ENCODE measurements at regions of chr14 and their contacts with region 1.

Region 1: GRCh38 chr14:104768437-104769323 is 15.7 kb downstream of the SIVA1 start:
- DNase-seq: peak; percentile 65
- H3K27ac ChIP-seq: peak overlapping the region; percentile 65
- CTCF ChIP-seq: peak; percentile 88

Region 2: DNA sequence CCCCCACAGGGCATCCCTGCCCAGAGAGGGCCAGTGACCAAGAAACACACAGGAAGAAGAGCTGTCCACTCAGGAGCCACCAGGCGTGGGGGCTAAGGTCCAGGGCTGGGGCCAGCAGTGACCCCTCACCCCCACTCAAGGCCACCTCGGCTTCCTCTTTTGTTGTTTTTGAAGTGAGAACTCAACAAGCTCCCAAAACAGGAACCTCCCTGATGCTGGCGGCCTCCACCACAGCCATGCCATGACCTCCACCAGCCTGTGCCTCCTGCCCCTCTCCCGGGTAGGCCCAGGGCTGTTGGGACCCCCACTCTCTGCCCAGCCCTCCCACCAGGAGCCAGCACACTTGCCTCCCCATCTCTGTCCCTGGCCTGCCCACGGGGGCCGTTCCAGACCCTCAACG is 19.1 kb after region 1 on chr14:
- CTCF ChIA-PET with region 1: interaction called, 10 read pairs
- POLR2A ChIA-PET with region 1: no interaction called
- DNase-seq: no peak
- H3K27ac ChIP-seq: peak overlapping the region; percentile 84
- CTCF ChIP-seq: no peak

Region 3: DNA sequence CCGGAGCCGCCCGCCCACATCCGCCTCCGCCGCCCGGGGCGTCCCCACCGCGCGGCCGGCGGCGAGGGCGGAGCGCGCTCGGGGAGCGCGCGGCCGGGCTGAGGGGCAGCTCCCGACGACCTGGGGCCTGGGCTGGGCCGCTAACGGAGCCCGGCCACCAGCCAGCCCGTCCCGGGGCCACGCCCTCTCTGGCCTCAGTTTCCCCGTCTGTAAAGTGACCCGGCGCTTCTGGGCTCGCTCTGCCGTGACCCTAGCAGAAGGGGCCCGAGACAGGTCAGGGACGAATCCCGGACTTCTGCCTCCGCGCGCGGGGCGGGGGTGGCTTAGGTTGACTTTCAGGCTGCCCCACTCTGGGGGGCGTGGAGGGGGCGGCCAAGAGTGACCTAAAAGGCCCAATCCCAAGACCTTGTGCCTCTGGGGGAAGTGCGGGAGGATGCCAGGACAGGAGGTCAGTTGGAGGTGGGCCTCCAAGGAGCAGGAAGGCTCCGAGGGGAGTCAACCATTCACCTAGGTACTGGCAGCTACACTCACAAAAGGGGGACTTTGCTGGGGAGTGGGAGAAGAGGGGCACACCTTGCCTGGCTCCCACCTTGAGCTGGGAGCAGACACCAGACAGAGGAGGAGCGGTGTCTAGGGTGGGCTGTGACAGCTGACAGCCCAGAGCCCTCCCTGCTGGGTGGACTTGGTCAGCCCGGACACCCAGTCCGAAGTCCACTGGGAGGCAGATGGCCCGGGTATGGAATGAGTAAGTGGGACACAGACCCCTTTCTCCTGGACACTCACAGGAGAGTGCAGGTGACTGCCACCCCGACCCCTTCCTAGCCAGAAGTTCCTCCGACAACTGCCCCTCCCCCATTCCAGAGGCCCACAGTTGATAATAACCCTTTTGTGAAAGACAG is 27.4 kb after region 1 on chr14:
- CTCF ChIA-PET with region 1: interaction called, 10 read pairs
- POLR2A ChIA-PET with region 1: no interaction called
- DNase-seq: peak; percentile 76
- H3K27ac ChIP-seq: peak overlapping the region; percentile 84
- CTCF ChIP-seq: no peak

Region 4: DNA sequence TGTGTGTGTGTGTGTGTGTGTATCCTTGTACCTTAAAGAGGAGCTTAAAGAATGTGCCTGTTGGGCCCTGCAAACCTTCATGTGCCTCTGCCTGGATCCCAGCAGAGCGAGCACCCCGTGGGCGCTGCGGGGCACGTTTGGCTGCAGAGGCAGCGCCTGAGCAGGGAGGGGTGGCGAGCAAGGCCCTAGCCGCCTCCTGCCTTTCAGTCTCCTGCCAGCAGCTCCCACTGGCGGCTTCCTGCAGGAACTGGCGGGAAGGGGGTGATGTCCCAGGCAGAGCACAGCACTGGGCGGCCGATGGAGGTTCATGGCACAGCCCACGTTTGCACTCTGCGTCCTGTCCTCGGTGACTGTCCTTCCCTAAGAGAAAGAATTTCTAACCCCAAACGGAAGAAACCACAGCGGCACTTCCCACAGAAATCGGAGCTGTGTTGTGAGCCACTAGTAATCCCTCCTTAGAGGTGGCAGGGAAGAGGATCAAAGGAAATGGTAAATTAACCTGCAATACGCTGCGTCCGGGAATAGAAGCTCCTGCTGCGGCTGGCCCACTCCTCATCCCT is 52.1 kb after region 1 on chr14:
- CTCF ChIA-PET with region 1: interaction called, 28 read pairs
- POLR2A ChIA-PET with region 1: no interaction called
- DNase-seq: peak; percentile 74
- H3K27ac ChIP-seq: peak overlapping the region; percentile 60
- CTCF ChIP-seq: peak; percentile 72

Region 5: DNA sequence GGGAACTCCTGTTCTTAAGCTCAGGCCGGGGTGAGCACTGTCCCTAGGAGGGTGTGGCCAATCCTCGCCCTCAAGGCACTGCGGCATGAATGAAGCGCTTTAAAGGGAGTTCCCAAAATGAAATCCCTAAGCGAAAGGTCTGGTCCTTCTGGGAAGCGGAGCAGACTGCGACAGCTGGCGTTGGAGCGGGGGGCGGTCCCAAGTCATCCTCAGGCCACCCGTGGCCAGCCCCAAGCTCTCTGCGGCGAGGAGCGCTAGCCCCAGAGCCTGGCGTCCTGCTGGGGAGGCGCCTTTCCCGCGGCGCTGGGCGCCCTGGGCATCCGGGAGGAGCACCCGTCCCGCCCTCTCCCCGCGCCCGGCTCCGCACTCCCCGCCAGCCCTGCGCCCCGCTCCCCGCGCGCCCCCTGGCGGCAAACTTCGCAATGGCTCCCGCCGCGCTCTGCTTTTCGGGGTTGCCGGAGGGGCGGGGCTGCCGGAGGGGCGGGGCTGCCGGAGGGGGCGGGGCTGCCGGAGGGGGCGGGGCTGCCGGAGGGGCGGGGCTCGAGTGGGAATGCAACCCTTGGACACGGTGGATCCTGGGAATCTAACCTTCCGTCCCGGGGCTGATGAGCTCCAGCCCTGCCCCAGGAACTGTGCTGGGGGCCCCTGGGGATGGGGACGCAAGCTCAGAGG is 57.6 kb after region 1 on chr14:
- CTCF ChIA-PET with region 1: interaction called, 28 read pairs
- POLR2A ChIA-PET with region 1: no interaction called
- DNase-seq: peak; percentile 93
- H3K27ac ChIP-seq: peak overlapping the region; percentile 75
- CTCF ChIP-seq: peak; percentile 89